PC-3 (cell line): ENCODE measurements at regions of chr6 and their contacts with region 1.

Region 1: DNA sequence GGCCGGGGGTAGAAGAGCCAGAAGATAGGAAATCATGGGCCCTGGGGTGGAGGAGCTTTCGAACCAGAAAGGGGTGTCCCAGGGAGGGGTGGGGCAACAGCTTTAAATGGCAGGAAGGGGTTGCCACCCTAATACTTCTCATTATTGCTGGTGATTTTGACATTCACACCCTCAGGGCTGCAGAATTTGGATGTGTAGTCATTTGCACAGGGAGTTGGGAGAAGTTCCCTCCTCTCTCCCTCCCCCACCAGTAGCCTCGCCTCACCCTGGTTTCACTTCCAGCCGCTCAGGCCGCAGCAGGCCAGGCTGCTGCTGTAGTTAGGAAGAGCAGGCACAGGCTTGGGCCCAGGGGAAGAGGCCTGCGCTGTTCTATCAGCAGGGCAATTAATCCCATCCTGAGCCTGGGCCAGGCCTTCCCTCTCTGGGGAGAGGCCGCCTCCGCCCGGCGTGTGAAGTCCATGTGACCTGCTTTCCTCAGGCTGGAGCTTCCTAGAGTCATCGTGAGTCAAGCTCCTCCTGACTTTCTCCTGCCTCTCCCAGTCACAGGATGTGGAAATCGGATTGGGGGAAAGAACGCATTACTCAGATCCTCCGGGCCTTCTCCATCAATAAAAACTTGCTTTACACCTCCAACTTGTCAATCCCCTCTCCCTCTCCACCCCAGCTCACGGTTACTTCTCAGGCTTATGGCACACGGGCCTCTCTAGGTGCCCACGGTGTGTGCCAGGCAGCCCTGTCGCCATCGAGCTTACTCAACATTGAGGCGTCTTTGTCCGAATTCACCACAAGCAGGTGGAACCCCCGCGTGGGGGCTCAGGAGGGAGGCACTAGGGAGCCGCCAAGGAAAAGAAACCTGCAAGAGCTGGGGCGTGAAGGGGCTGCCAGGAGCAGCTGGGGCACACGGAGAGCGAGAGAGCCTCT is 7.8 kb downstream of the ADTRP start:
- DNase-seq: peak; percentile 98
- ATAC-seq: peak; percentile 83
- H3K4me3 ChIP-seq: peak overlapping the region; percentile 29; the same call in 1 of the 2 replicates
- H3K27ac ChIP-seq: peak overlapping the region; percentile 97
- H3K4me1 ChIP-seq: peaks cover 71% of the 10 kb centered on the region
- H3K27me3 ChIP-seq: no peaks in the 10 kb centered on the region
- CTCF ChIP-seq: no peak

Region 2: GRCh38 chr6:11700118-11700718 is 70.6 kb before region 1 on chr6:
- CTCF ChIA-PET with region 1: no interaction called
- POLR2A ChIA-PET with region 1: no interaction called
- intact Hi-C with region 1: loop called (anchors 1 kb)
- DNase-seq: peak; percentile 74
- ATAC-seq: no peak
- H3K4me3 ChIP-seq: no peak overlapping the region
- H3K27ac ChIP-seq: no peak overlapping the region
- H3K4me1 ChIP-seq: peaks cover 15% of the 10 kb centered on the region
- H3K27me3 ChIP-seq: no peaks in the 10 kb centered on the region
- CTCF ChIP-seq: peak; percentile 59

Region 3: DNA sequence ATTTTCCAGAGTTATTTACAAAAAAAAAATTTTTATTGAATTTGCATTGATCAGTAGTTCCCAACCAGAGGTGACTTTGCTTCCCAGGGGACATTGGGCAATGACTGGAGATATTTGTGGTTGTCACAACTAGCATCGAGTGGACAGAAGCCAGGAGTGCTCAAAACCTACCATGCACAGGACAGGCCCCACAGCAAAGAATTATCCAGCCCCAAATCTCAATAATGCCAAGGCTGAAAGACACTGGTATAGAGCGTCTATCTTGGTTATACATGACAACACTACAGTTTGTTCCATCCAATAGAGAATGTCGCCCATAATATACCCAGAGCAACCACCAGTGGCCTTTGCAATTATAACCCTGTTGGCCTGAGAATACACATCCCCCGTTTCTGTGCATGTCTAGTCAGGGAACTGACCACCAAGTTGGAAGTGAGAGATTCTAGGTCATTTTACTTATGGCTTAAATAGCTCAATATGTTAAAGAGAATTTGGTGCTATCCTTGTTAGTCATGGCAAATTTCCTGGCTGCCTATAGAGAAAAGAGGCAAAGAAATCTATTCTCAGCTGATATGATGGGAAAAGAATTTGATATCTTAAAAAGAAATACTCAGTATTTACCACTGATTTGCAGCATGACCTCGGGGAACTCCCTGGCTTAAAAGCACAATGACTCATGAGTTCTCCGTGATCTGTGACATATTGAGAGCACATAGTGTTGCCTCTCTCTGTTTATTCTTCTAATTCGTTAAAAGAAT is 83.8 kb after region 1 on chr6:
- CTCF ChIA-PET with region 1: no interaction called
- POLR2A ChIA-PET with region 1: no interaction called
- intact Hi-C with region 1: loop called (anchors 5 kb)
- DNase-seq: peak; percentile 66
- ATAC-seq: peak; percentile 91
- H3K4me3 ChIP-seq: no peak overlapping the region
- H3K27ac ChIP-seq: 0 out of 2 replicates have a peak overlapping the region, but pooled peaks have one; percentile 7
- H3K4me1 ChIP-seq: peaks cover 9% of the 10 kb centered on the region; the same call in 1 of the 2 replicates
- H3K27me3 ChIP-seq: no peaks in the 10 kb centered on the region
- CTCF ChIP-seq: no peak